Thyroid gland (tissue), 4 donors: ENCODE measurements at regions of chr4 and their contacts with region 1.

Region 1: DNA sequence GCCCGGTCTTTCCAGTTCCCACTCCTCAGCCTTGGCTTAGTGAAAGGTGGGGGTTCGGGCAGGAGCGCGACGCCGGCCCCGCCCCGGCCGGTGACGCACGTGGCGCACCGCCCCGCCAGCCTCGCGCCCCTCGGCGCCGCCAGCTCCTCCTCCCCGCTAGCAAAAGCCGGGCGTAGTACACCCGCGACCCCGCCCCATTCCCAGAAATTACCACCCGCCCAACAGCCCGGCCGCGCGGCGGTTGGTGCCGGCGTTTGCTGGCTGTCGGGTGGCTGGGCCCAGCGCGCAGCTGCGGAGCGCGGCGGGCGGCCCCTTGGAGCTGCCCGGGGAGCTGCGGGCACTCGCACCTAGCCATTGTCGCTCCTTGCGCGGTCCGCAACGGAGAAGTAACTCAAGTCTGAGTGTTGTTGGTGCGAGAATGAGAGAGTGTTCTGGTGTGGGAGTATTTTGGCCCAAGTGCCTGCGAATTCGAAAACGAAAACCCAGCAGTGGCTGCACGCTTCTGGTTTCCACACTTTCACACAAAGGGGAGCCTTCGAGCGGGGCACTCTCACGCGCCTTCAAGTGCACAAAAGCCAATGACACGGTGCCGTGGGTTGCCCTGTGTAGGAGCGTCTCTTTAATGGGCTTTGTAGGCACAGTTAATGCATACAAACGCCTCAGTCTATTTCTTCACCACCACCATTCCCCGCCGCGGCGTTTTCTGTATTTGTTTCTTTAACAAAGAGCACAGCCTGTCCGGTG is 1.0 kb upstream of the ELF2 start:
- DNase-seq: peak; percentile 96 to 97
- H3K4me3 ChIP-seq: peak overlapping the region; percentile 43 to 97 (median 91)
- H3K27ac ChIP-seq: peak overlapping the region; percentile 93 to 100 (median 98)
- H3K4me1 ChIP-seq: peaks cover 6 to 13% of the 10 kb centered on the region in 2 donors
- H3K27me3 ChIP-seq: no peaks in the 10 kb centered on the region
- CTCF ChIP-seq: no peak
- POLR2A ChIP-seq: peak in 1 of 2 donors; percentile 96

Region 2: DNA sequence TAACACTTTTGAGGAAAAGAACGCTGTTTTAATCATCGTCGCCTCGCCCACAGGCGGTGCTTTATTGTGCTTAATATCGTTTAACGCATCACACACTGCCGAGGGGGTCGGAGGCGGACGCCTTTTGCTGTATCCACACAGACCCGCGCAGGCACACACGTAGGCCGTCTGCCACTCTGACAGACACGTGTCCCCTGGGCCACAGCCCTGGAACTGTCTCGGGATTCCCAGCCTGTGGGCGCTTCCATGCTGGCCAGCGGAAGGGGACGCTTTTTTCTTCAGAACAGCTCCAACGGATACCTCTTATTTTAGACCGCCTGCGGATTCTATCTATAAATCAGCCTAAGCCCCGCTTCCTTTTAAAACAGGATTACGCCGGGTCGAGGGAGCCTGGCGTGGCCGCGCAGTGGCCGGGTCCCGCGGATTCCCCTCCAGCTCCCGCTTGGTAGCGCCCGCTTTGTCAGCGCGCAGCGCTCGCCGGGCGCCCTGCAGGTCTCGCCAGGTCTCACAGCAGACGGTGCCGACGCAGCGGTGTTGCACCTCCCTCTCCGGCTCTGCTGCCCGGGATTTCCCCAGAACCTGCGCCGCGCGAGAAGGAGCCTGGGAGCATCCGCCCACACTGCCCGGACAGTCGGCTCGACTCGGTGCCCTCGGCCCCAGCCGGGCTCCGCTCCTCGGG is 162.6 kb before region 1 on chr4 and contains the start of gene NOCT:
- intact Hi-C with region 1: loop called (anchors 5 kb)
- DNase-seq: peak; percentile 94 to 95
- H3K4me3 ChIP-seq: peak within 1 kb of the TSS; percentile 19 to 75 (median 62)
- H3K27ac ChIP-seq: peak within 1 kb of the TSS; percentile 88 to 97 (median 94)
- H3K4me1 ChIP-seq: peaks cover 3 to 18% of the 10 kb centered on the region in 2 donors
- H3K27me3 ChIP-seq: no peaks in the 10 kb centered on the region
- CTCF ChIP-seq: peak in 4 of 6 experiments; percentile 16 to 42 (median 32)
- POLR2A ChIP-seq: peak; percentile 82 to 99
- total RNA-seq, gene NOCT: 4.0 to 11.5 (median 6.6) TPM

Region 3: DNA sequence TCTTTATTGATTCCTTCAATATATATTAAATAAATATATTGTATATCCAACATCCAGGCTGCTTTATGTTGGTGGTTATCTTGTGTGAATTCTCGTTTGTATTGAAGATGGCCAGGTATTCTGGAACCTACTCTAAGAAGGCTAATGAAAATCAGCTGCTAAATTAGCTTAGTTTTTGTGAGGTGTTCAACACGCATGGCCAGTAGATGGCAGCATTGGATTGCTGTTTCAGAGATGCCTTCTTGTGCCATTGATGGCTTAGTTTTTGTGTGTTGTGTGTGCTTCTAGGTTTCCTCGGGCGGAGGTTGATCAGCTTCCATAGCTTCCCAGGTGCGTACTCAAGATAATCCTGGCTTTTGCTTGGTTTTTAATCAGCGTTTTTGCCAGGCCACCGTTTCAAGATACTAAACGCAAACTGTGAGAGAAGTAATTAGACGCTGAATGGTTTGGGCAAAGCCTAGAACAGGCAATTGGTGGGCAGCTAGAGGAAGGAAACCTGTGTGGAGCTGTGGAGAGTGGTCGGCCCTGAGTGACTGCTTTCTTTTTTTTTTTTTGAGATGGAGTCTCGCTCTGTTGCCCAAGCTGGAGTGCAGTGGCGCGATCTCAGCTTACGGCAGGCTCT is 147.3 kb before region 1 on chr4:
- intact Hi-C with region 1: loop called (anchors 5 kb)
- DNase-seq: peak; percentile 78 to 85
- H3K4me3 ChIP-seq: no peak overlapping the region
- H3K27ac ChIP-seq: peak overlapping the region in 1 of 3 donors; percentile 88
- H3K4me1 ChIP-seq: peaks cover 21 to 36% of the 10 kb centered on the region in 2 donors
- H3K27me3 ChIP-seq: no peaks in the 10 kb centered on the region
- CTCF ChIP-seq: peak; percentile 23 to 92 (median 84)
- POLR2A ChIP-seq: no peak

Region 4: GRCh38 chr4:139083956-139084803 is 93.9 kb before region 1 on chr4:
- intact Hi-C with region 1: loop called (anchors 5 kb)
- DNase-seq: peak; percentile 94
- H3K4me3 ChIP-seq: peak overlapping the region; percentile 69 to 99 (median 70)
- H3K27ac ChIP-seq: peak overlapping the region; percentile 81 to 93 (median 90)
- H3K4me1 ChIP-seq: peaks cover 7 to 16% of the 10 kb centered on the region in 2 donors
- H3K27me3 ChIP-seq: no peaks in the 10 kb centered on the region
- CTCF ChIP-seq: peak in 4 of 6 experiments; percentile 14 to 43 (median 36)
- POLR2A ChIP-seq: peak in 1 of 2 donors; percentile 79

Region 5: GRCh38 chr4:139129206-139129605 is 48.8 kb before region 1 on chr4:
- intact Hi-C with region 1: no loop called
- DNase-seq: no peak
- H3K4me3 ChIP-seq: no peak overlapping the region
- H3K27ac ChIP-seq: no peak overlapping the region
- H3K4me1 ChIP-seq: peaks cover 9 to 11% of the 10 kb centered on the region in 2 donors
- H3K27me3 ChIP-seq: no peaks in the 10 kb centered on the region
- CTCF ChIP-seq: no peak
- POLR2A ChIP-seq: no peak

Region 6: GRCh38 chr4:139295206-139295941 is 117.3 kb after region 1 on chr4:
- intact Hi-C with region 1: loop called (anchors 5 kb)
- DNase-seq: peak; percentile 97 to 98
- H3K4me3 ChIP-seq: peak overlapping the region; percentile 66 to 97 (median 72)
- H3K27ac ChIP-seq: peak overlapping the region; percentile 28 to 90 (median 72)
- H3K4me1 ChIP-seq: peaks cover 8 to 13% of the 10 kb centered on the region in 2 donors
- H3K27me3 ChIP-seq: no peaks in the 10 kb centered on the region
- CTCF ChIP-seq: peak; percentile 77 to 96 (median 90)
- POLR2A ChIP-seq: peak in 1 of 2 donors; percentile 79

Region 7: DNA sequence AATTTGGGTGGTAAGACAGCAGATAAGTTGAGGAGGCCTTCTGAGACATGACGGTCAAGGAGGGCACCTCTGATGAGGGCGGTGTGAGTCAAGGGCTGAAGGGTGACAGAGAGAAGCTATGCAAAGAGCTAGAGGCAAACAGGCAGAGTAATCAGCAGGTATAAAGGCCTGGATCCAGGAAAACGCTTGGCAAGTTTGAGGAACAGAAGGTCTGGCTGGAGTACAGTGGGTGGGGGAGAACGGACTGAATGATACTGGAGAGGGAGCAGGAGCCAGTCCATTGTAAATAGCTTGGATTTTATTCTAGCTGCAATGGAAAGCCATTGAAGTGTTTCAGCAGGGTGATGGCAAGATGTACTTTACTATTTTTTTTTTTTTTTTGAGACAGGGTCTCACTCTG is 315.1 kb after region 1 on chr4:
- intact Hi-C with region 1: no loop called
- DNase-seq: no peak
- H3K4me3 ChIP-seq: no peak overlapping the region
- H3K27ac ChIP-seq: no peak overlapping the region
- H3K4me1 ChIP-seq: peaks cover 0 to 4% of the 10 kb centered on the region in 2 donors
- H3K27me3 ChIP-seq: no peaks in the 10 kb centered on the region
- CTCF ChIP-seq: no peak
- POLR2A ChIP-seq: no peak